ENCODE measurements at regions of chr14 and their contacts with region 1.

Region 1: GRCh38 chr14:77320238-77320935 is at the start of gene POMT2:
- DNase-seq: peak; percentile 64
- ATAC-seq: peak; percentile 81
- H3K4me3 ChIP-seq: peak within 1 kb of the TSS; percentile 98
- H3K27ac ChIP-seq: peak within 1 kb of the TSS; percentile 98
- H3K4me1 ChIP-seq: peaks cover 4% of the 10 kb centered on the region; the same call in 1 of the 2 replicates
- H3K27me3 ChIP-seq: no peaks in the 10 kb centered on the region
- CTCF ChIP-seq: peak; percentile 14 to 27 (median 26); a peak in 4 of 6 replicates
- EP300 ChIP-seq: no peak
- POLR2A ChIP-seq: no peak
- RAD21 ChIP-seq: no peak
- polyA plus RNA-seq, gene POMT2: 0.23 to 0.99 TPM

Region 2: DNA sequence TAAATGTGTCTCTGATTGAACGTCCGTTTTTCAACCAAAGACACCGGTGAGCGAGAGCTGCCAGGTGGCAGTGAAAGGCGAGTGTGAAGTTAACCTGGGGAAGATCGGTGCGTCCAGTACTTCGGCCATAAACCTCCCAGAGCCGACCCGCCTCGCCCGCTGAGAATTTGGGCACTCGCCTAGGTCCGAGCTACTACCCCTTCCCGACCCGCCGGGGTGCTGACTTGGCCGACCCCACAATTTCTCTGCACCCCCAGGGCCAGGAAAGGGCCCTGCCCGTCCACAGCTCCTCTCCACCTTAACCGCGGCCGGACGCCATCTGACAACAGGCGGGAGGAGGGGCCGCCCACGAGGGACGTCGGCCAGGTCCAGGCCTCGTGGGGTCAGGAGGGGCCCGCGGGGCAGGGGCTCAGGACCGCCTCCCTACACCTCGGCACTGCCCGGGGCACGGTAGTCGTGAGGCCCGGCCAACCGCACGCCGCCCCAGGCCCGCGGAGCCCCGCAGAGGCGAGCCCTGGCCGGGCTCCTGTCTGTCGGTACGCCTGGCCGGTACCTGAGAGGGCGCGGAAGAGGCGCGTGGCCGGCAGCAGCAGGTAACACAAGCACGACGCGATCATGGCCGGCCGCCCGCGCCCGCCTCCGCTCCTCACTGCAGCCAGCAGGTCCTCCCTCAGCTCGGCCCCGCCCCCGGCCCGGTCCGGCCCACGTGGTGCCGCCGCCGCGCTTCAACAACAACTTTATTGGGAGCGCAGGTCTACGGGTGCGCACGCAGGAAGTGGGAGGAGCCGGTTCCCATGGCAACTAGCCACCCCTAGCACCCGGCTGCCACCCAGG is 508.0 kb before region 1 on chr14 and contains the start of gene ANGEL1:
- CTCF ChIA-PET with region 1: no interaction called
- POLR2A ChIA-PET with region 1: no interaction called
- RAD21 ChIA-PET with region 1: no interaction called
- SMC1A ChIA-PET with region 1: no interaction called
- in situ Hi-C with region 1: no loop called
- intact Hi-C with region 1: no loop called
- DNase-seq: peak; percentile 79
- ATAC-seq: peak; percentile 96
- H3K4me3 ChIP-seq: peak within 1 kb of the TSS; percentile 96
- H3K27ac ChIP-seq: peak within 1 kb of the TSS; percentile 23
- H3K4me1 ChIP-seq: no peaks in the 10 kb centered on the region
- H3K27me3 ChIP-seq: peaks cover 0 to 2% of the 10 kb centered on the region in 2 experiments; a peak in 1 of 4 replicates
- CTCF ChIP-seq: no peak
- EP300 ChIP-seq: no peak
- POLR2A ChIP-seq: peak; percentile 96
- RAD21 ChIP-seq: no peak
- polyA plus RNA-seq, gene ANGEL1: 1.7 to 2.8 TPM

Region 3: GRCh38 chr14:77376771-77377501 is 56.5 kb after region 1 on chr14 and contains the starts of genes SAMD15 and TMED8:
- CTCF ChIA-PET with region 1: interaction called, 10 read pairs
- POLR2A ChIA-PET with region 1: interaction called, 12 read pairs
- RAD21 ChIA-PET with region 1: interaction called, 21 read pairs
- SMC1A ChIA-PET with region 1: interaction called, 8 read pairs
- in situ Hi-C with region 1: no loop called
- intact Hi-C with region 1: loop called (anchors 1 kb)
- DNase-seq: peak; percentile 53
- ATAC-seq: peak; percentile 94
- H3K4me3 ChIP-seq: peak within 1 kb of the TSS; percentile 83
- H3K27ac ChIP-seq: peak within 1 kb of the TSS; percentile 89
- H3K4me1 ChIP-seq: peaks cover 15% of the 10 kb centered on the region
- H3K27me3 ChIP-seq: no peaks in the 10 kb centered on the region
- CTCF ChIP-seq: peak in 2 of 3 experiments; percentile 25 to 27; a peak in 2 of 6 replicates
- EP300 ChIP-seq: no peak
- POLR2A ChIP-seq: peak; percentile 75
- RAD21 ChIP-seq: no peak
- polyA plus RNA-seq, gene SAMD15: 0.63 to 0.93 TPM
- polyA plus RNA-seq, gene TMED8: 7.3 to 7.4 TPM

Region 4: DNA sequence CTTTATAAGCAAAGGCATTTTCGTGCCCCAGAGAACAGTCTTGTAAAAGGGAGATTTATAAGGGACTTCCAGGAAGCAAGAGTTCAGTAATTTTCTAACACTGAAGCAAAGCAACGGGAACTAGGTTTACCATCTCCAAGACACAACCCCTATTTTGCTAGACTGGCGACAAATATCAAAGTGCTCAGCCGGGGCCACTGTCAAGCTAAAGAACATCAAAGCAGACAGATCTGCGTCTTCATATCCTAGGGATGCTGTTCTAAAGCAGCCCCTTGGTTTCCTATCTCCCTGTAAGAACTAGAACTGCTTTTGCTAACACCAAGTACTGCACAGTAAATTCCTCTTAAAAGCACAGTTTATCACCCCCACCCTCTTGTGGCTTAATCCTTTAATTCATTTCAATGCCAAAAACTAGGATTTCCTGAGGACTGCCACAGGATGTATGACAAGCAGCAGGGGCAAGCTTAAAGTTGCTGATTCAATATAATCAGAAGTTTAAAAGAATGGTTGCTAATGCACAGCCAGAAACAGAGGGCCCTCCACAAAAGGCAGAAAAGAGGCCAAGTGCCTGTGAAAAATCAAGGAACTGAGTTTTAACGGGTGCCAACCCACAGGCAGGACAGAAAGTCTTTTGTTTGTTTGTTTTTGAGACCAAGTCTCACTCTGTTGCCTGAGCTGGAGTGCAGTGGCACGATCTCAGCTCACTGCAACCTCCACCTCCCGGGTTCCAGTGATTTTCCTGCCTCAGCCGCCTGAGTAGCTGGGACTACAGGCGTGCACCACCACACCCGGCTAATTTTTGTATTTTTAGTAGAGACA is 222.2 kb after region 1 on chr14:
- CTCF ChIA-PET with region 1: interaction called, 3 read pairs
- POLR2A ChIA-PET with region 1: no interaction called
- RAD21 ChIA-PET with region 1: interaction called, 3 read pairs
- SMC1A ChIA-PET with region 1: no interaction called
- in situ Hi-C with region 1: no loop called
- intact Hi-C with region 1: loop called (anchors 5 kb)
- DNase-seq: no peak
- ATAC-seq: peak; percentile 66
- H3K4me3 ChIP-seq: peak overlapping the region; percentile 10; the same call in 1 of the 2 replicates
- H3K27ac ChIP-seq: peak overlapping the region; percentile 73
- H3K4me1 ChIP-seq: peaks cover 19% of the 10 kb centered on the region
- H3K27me3 ChIP-seq: no peaks in the 10 kb centered on the region
- CTCF ChIP-seq: no peak
- EP300 ChIP-seq: no peak
- POLR2A ChIP-seq: no peak
- RAD21 ChIP-seq: no peak

Region 5: DNA sequence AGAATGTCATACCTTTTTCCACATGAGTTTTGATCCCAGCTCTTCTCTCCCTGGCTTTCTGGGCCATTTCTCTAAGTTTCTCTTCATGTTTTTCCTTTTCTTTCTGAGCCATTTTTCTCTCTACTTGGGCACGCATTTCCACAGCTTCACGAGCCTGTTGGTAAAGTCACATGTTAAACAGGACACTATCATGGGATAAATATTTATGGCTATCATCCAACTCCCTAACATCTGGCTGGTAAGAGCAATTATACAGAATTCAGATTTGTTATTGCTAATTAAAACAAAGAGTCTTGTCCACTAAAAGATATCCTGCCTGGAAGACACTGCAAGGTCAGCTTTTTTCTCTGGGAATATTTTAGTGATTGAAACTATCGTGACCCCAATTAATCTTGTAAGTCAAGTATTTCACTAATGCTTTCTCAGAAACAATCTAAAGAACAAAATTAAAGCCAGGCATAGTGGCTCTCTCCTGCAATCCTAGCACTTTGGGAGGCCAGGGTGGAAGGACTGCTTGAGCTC is 410.6 kb after region 1 on chr14:
- CTCF ChIA-PET with region 1: no interaction called
- POLR2A ChIA-PET with region 1: no interaction called
- RAD21 ChIA-PET with region 1: no interaction called
- SMC1A ChIA-PET with region 1: no interaction called
- in situ Hi-C with region 1: no loop called
- intact Hi-C with region 1: no loop called
- DNase-seq: no peak
- ATAC-seq: no peak
- H3K4me3 ChIP-seq: no peak overlapping the region
- H3K27ac ChIP-seq: no peak overlapping the region
- H3K4me1 ChIP-seq: no peaks in the 10 kb centered on the region
- H3K27me3 ChIP-seq: no peaks in the 10 kb centered on the region
- CTCF ChIP-seq: no peak
- EP300 ChIP-seq: no peak
- POLR2A ChIP-seq: no peak
- RAD21 ChIP-seq: no peak

Measured in GM12878 (cell line).